ENCODE measurements at regions of chr17 and their contacts with region 1.

Region 1: DNA sequence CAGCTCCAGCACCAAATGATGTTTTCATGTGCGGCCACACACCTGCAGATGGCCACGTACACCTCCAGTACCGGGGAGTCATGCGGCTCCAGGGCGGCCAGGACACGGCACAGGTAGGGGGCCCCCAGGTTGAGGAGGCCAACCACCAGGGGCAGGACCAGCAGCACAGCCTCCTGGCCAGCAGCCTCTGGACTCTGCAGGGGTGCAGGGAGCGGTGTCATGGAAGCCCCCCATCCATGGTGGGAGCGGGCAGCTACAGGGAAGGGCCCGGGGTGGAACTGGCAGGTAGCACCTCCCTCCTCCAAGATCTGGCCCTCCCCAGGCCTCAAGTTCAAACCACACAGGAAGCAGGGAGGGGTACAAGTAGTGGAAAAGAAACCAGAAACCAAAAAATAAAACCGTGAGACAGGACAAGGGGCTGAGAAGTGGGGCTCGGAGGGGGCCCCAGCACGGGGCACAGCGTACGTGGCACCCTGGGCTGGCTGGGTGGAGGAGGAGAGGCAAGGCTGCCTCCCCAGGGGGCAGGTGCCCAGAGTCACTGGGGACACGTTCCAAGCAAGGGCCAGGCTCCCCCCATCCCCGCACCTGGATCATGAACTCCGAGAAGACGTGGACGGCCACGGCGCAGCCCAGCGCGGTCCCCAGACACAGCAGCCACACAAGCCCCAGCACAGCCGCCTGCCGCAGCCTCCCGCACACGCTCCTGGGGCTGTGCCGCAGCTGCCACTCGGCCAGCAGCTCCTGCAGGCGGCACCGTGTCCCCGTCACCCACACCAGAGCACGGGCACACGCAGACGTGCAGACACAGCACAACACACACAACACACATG is 7.4 kb downstream of the TMC6 start:
- DNase-seq: peak in 13 of 14 experiments; percentile 40 to 90 (median 64)
- ATAC-seq: peak; percentile 61
- H3K4me3 ChIP-seq: peak overlapping the region; percentile 53
- H3K4me3 Mint-ChIP-seq: peak overlapping the region; percentile 76
- H3K27ac ChIP-seq: peak overlapping the region; percentile 52 to 79
- H3K27ac Mint-ChIP-seq: peak overlapping the region; percentile 83
- H3K4me1 ChIP-seq: peaks cover 99% of the 10 kb centered on the region
- H3K4me1 Mint-ChIP-seq: peaks cover 60% of the 10 kb centered on the region
- H3K27me3 ChIP-seq: no peaks in the 10 kb centered on the region
- H3K27me3 Mint-ChIP-seq: no peaks in the 10 kb centered on the region
- CTCF ChIP-seq: no peak

Region 2: DNA sequence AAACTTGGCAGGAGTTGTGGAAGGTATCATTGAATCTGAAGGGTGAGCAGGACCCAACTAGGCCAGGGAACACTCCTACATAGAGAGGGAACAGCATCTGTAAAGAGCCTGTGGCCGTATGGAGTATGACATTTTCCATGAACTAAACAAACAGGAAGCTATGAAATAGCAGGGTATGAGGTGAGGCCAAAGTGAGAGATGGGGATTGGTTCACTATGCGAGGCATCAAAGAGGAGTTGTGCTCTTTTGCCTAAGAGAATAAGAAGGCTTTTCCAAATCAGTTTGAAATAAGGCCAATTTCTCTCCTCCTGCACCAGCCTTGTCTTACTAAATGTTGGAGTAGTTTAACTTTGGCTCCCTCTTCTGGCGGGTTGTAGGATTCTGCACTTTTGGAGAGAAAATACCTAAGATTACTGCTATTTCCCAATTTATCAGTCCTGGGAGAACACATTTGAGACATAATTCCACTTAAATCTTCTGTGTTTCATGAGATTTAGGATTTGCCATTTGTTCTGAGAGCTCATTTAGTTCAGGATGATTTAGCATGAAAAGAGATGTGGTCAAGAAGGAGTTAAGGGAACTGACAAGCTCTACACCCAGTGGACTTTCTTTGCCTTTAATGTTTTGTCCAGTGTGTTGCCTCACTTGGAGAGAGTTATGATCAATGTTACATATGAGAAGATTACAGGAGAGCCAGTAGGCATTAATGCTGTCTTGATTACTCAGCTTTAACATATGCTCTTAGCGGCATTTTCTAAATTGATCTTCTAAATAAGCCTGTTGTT is 107.3 kb before region 1 on chr17:
- CTCF ChIA-PET with region 1: no interaction called
- POLR2A ChIA-PET with region 1: no interaction called
- intact Hi-C with region 1: no loop called
- DNase-seq: peak in 13 of 14 experiments; percentile 6 to 84 (median 42)
- ATAC-seq: peak; percentile 75
- H3K4me3 ChIP-seq: no peak overlapping the region
- H3K4me3 Mint-ChIP-seq: no peak overlapping the region
- H3K27ac ChIP-seq: no peak overlapping the region
- H3K27ac Mint-ChIP-seq: peak overlapping the region; percentile 34
- H3K4me1 ChIP-seq: peaks cover 4% of the 10 kb centered on the region
- H3K4me1 Mint-ChIP-seq: peaks cover 47% of the 10 kb centered on the region
- H3K27me3 ChIP-seq: no peaks in the 10 kb centered on the region
- H3K27me3 Mint-ChIP-seq: no peaks in the 10 kb centered on the region
- CTCF ChIP-seq: peak; percentile 88

Region 3: DNA sequence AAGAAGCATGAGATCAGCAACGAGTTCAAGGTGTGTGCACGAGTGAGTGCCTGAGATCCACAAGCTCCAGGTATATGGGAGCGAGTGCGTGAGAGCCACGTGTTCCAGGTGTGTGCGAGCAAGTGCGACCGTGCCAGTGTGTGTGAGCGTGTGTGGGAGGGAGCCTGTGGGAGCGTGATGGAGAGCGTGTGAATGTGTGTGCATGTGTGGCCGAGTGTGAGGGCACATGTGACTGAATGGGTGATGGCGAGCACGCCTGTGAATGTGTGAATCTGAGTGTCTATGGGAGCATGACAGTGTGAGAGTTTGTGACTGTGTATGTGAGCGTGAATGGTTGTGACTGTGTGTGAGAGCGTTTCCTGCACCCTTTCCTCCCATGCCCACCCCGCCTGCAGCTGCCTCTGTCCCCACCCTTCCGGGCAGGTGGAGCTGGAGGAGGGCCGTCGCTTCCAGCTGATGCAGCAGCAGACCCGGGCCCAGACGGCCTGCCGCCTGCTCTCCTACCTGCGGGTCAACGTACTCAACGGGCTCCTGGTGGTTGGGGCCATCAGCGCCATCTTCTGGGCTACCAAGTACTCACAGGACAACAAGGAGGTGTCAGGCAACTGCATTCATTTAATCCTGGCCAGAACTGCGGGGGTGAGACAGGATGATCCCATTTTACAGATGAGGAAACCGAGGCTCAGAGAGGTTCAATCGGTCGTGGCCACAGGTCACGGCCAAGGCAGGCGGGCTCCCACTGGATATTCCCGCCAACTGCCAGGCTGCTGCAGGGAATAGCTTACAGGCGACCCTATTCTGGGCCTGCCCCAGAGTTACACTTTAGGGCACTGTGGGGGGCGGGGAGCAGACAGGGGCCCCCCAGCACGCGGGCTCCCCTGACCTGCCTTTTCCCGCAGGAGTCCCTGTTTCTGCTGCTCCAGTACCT is 13.0 kb after region 1 on chr17:
- CTCF ChIA-PET with region 1: interaction called, 38 read pairs
- POLR2A ChIA-PET with region 1: interaction called, 766 read pairs
- intact Hi-C with region 1: loop called (anchors 1 kb)
- DNase-seq: peak; percentile 71 to 93 (median 78)
- ATAC-seq: peak; percentile 34
- H3K4me3 ChIP-seq: peak overlapping the region; percentile 94
- H3K4me3 Mint-ChIP-seq: peak overlapping the region; percentile 88
- H3K27ac ChIP-seq: peak overlapping the region; percentile 7 to 92
- H3K27ac Mint-ChIP-seq: peak overlapping the region; percentile 81
- H3K4me1 ChIP-seq: peaks cover 90% of the 10 kb centered on the region
- H3K4me1 Mint-ChIP-seq: peaks cover 80% of the 10 kb centered on the region
- H3K27me3 ChIP-seq: no peaks in the 10 kb centered on the region
- H3K27me3 Mint-ChIP-seq: no peaks in the 10 kb centered on the region
- CTCF ChIP-seq: peak; percentile 75